Natural killer cell (primary cell): ENCODE measurements at regions of chr10 and their contacts with region 1.

Region 1: DNA sequence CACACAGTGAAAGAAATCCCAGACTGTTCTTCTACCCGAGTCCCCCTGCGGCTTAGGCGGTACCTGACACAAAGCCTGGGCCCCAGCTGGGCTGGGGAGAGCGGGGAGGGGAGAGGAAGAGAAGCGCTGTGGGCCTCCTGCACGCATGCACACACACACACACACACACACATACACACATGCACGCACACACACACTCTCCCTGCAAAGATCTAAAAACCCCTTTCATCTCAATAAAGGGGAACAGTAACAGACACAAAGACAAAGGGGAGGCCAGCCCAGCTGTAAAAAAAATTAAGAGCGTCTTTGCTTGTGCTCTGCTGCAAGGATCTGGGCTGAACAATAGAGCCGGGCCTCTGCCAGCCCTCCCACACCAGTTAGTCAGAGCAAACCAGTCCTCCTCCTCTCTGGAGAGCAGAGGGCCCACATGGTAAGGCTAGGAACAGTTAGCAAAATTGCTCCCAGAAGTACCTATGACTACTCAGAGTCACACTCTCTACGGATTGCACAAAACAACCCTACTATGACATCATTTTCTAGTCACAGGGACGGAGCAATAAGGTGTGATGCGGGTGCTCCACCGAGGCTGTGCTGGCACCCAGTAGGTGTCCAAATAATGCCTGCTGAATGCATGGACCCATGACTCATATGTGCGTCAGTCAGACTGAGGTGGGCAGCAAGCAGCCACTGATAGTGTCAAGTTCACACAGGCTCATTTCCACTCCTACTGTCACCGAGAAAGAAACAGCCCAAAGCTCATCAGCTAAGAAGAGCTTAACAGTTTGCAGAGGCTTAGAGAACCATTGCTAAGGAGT is 9.2 kb downstream of the ITPRIP start:
- DNase-seq: peak; percentile 84 to 90
- ATAC-seq: peak; percentile 76 to 91 (median 85)
- H3K4me3 ChIP-seq: peak overlapping the region; percentile 17
- H3K4me3 Mint-ChIP-seq: peak overlapping the region; percentile 82
- H3K27ac ChIP-seq: peak overlapping the region; percentile 94
- H3K27ac Mint-ChIP-seq: peak overlapping the region; percentile 98 to 100
- H3K4me1 ChIP-seq: peaks cover 96% of the 10 kb centered on the region
- H3K4me1 Mint-ChIP-seq: peaks cover 97 to 99% of the 10 kb centered on the region in 2 donors
- H3K27me3 ChIP-seq: no peaks in the 10 kb centered on the region
- H3K27me3 Mint-ChIP-seq: no peaks in the 10 kb centered on the region
- CTCF ChIP-seq: no peak

Region 2: DNA sequence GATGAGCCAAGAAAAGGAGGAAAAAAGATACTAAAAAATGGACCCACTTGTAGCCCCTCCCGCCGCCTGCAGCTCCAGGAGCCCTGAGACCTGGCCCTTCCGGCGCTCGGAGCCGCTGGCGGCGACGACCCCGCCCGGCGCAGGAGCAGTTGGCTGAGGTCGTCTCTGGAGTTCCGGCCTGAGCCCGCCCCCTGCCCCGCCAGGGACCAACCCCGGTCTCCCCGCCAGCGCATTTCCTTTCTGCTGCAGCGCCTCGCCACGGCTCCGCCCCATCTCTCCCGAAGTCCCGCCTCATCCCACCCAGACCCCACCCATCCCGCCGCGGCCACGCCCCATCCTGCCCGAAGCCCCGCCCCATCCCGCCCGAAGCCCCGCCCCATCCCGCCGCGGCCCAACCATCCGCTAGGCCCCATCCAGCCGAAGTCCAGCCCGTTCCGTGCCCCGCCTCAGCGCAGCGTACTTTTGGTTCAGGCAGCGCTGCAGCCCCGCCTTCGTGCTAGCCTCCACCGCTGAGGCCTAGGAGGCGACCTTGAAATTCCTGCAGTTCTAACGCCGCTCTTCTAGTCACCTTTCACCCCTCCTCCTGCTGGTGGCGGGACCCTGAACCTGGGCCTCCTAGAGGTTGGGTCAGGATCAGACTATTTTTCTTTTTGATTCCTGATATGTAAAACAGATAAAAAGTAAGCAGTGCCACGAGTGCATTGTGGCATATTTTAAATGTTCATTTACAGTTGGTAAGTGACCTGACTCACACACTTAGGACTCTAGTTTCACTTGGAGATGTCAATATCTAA is 410.9 kb before region 1 on chr10 and contains the start of gene STN1:
- intact Hi-C with region 1: loop called (anchors 10 kb)
- DNase-seq: peak; percentile 88 to 97
- ATAC-seq: peak; percentile 89 to 98 (median 92)
- H3K4me3 ChIP-seq: peak within 1 kb of the TSS; percentile 71
- H3K4me3 Mint-ChIP-seq: peak within 1 kb of the TSS; percentile 96
- H3K27ac ChIP-seq: peak within 1 kb of the TSS; percentile 69
- H3K27ac Mint-ChIP-seq: peak within 1 kb of the TSS; percentile 94 to 97
- H3K4me1 ChIP-seq: peaks cover 41% of the 10 kb centered on the region
- H3K4me1 Mint-ChIP-seq: peaks cover 34 to 40% of the 10 kb centered on the region in 2 donors
- H3K27me3 ChIP-seq: no peaks in the 10 kb centered on the region
- H3K27me3 Mint-ChIP-seq: no peaks in the 10 kb centered on the region
- CTCF ChIP-seq: no peak
- total RNA-seq, gene STN1: 31.7 to 53.4 (median 34.0) TPM

Region 3: DNA sequence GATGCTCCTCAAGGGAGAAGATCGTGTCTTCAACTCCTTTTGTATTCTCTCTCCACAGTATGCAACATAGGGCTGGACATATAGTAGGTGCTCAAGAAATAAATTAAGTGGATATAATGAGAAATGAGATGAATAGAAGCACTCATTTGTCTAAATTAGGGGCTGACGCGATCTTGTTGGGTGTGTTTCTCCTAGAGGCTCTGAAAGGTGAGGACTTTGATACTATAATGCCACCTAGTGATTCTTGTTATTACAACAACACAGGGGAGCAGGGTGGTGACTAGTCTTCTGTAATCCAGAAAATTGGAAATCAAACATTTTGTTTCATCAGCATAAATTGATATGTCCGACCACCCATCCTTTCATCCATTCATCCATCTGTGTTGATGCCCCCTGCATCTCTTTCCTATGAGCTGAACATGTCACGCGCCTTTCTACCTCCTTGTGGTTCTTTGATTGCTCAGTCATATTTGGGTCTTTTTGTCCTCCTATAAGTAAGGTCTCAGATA is 21.1 kb after region 1 on chr10:
- intact Hi-C with region 1: loop called (anchors 2 kb)
- DNase-seq: peak in 1 of 2 donors; percentile 84
- ATAC-seq: peak; percentile 68 to 72 (median 71)
- H3K4me3 ChIP-seq: no peak overlapping the region
- H3K4me3 Mint-ChIP-seq: no peak overlapping the region
- H3K27ac ChIP-seq: peak overlapping the region; percentile 47
- H3K27ac Mint-ChIP-seq: no peak overlapping the region
- H3K4me1 ChIP-seq: peaks cover 41% of the 10 kb centered on the region
- H3K4me1 Mint-ChIP-seq: peaks cover 16 to 29% of the 10 kb centered on the region in 2 donors
- H3K27me3 ChIP-seq: no peaks in the 10 kb centered on the region
- H3K27me3 Mint-ChIP-seq: no peaks in the 10 kb centered on the region
- CTCF ChIP-seq: peak; percentile 73